Dorsolateral prefrontal cortex (tissue), 120 donors: ENCODE measurements at regions of chr21 and their contacts with region 1.

Region 1: GRCh38 chr21:37563641-37564340 is 197.2 kb downstream of the DYRK1A start:
- DNase-seq: peak; percentile 88 to 96 (median 94)
- H3K4me3 ChIP-seq: peak overlapping the region; percentile 59 to 97 (median 82)
- H3K27ac ChIP-seq: peak overlapping the region; percentile 42 to 98 (median 94)
- H3K27me3 ChIP-seq: no peaks in the 10 kb centered on the region
- CTCF ChIP-seq: peak; percentile 18 to 80 (median 66)

Region 2: GRCh38 chr21:37072988-37073416 is 490.8 kb before region 1 on chr21 and contains the starts of genes PIGP and TTC3:
- intact Hi-C with region 1: loop called (anchors 2 to 5 kb)
- DNase-seq: peak; percentile 86 to 97 (median 94)
- H3K4me3 ChIP-seq: peak within 1 kb of the TSS; percentile 70 to 99 (median 91)
- H3K27ac ChIP-seq: peak within 1 kb of the TSS; percentile 96 to 100 (median 100)
- H3K27me3 ChIP-seq: no peaks in the 10 kb centered on the region
- CTCF ChIP-seq: peak in 2 of 56 donors; percentile 4 to 7
- total RNA-seq, gene PIGP: 10.2 to 39.8 (median 22.9) TPM
- total RNA-seq, gene TTC3: 216 to 414 (median 302) TPM

Region 3: GRCh38 chr21:37267269-37268184 is 296.3 kb before region 1 on chr21 and contains the start of gene VPS26C:
- intact Hi-C with region 1: loop called (anchors 2 to 5 kb)
- DNase-seq: peak; percentile 94 to 99 (median 98)
- H3K4me3 ChIP-seq: peak within 1 kb of the TSS; percentile 62 to 99 (median 92)
- H3K27ac ChIP-seq: peak within 1 kb of the TSS; percentile 89 to 100 (median 98)
- H3K27me3 ChIP-seq: no peaks in the 10 kb centered on the region
- CTCF ChIP-seq: peak in 20 of 56 donors; percentile 5 to 38 (median 18)
- total RNA-seq, gene VPS26C: 32.9 to 58.9 (median 44.4) TPM

Region 4: GRCh38 chr21:37374027-37374426 is 189.8 kb before region 1 on chr21:
- intact Hi-C with region 1: no loop called
- DNase-seq: no peak
- H3K4me3 ChIP-seq: no peak overlapping the region
- H3K27ac ChIP-seq: no peak overlapping the region
- H3K27me3 ChIP-seq: no peaks in the 10 kb centered on the region
- CTCF ChIP-seq: no peak

Region 5: DNA sequence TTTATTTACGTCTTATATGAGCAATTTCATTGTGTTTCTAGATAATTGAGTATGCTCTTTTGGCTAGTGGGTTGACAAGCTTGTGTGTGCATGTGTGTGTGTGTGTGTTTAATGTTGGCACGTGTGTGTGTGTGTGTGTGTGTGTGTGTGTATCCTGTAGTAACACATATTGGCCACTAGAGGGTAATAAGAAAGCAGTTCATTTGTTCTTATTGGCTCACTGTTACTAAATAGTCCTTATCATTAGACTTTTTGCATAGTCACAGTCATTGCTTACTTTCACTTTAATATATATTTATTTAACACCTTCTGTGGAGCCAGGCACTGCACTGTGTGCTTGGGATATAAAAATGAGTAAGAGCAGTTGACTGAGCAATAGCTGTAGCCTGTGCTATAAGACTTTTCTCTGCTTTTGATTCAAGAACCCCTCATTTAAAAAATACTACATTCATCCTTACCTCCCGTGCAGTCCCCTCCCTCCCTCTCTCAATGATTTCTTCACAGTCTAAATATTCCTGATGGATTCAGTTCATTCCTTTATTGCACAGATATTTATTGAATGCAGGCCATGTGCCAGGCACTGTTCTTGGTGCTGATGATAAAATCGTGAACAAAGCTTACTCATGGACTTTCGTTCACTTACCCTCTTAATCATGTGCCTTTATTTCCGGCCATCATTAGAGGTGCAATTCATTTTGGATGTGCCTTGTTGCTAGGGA is 100.5 kb before region 1 on chr21:
- intact Hi-C with region 1: loop called in 1 of 2 experiments (anchors 5 kb)
- DNase-seq: no peak
- H3K4me3 ChIP-seq: peak overlapping the region in 19 of 59 donors; percentile 2 to 46 (median 22)
- H3K27ac ChIP-seq: peak overlapping the region in 3 of 59 donors; percentile 6 to 50 (median 8)
- H3K27me3 ChIP-seq: no peaks in the 10 kb centered on the region
- CTCF ChIP-seq: peak in 53 of 56 donors; percentile 18 to 67 (median 48)